MCF 10A (cell line): ENCODE measurements at regions of chr2 and their contacts with region 1.

Region 1: DNA sequence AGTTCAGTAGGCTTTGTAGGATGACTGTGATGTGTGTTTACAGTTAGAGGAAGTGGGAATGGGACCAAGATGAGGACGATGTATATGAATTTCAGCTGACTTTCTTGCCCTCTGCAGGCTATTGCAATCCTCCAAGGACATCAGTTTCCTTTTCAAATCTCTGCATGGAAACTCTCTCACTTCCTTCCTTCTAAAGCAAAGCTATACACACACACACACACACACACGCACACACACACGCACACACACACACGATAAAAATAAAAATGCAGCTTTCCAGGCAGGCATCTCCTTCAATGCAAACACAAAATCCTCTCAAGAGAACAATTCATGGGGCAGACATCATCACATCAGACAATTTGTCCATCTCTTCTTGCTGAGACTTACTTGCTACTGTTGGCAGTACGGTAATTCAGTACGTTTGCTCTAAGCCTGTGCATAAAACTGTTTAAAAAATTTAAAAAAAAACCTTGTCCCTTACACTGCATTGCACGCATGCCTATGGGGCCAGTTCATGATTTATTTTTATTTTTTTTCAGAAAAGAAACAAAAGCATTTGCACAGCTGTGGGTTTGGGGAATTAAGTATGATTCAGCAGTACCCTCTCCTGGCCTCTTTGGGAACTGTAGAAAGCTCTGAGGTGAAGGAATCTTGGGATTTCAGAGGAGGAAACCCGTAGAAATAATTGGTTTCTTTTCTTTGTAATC is 27.1 kb upstream of the ICOS start:
- DNase-seq: peak; percentile 59
- H3K4me3 Mint-ChIP-seq: no peak overlapping the region
- H3K27ac Mint-ChIP-seq: no peak overlapping the region
- H3K4me1 Mint-ChIP-seq: no peaks in the 10 kb centered on the region
- H3K27me3 Mint-ChIP-seq: peaks cover 12% of the 10 kb centered on the region
- CTCF ChIP-seq: peak; percentile 70

Region 2: GRCh38 chr2:202831242-202832220 is 1077.9 kb before region 1 on chr2:
- CTCF ChIA-PET with region 1: no interaction called
- POLR2A ChIA-PET with region 1: no interaction called
- intact Hi-C with region 1: loop called (anchors 1 kb)
- DNase-seq: peak; percentile 84
- H3K4me3 Mint-ChIP-seq: no peak overlapping the region
- H3K27ac Mint-ChIP-seq: no peak overlapping the region
- H3K4me1 Mint-ChIP-seq: peaks cover 8% of the 10 kb centered on the region
- H3K27me3 Mint-ChIP-seq: no peaks in the 10 kb centered on the region
- CTCF ChIP-seq: peak; percentile 46

Region 3: GRCh38 chr2:203225423-203226039 is 683.9 kb before region 1 on chr2:
- CTCF ChIA-PET with region 1: interaction called, 4 read pairs
- POLR2A ChIA-PET with region 1: no interaction called
- intact Hi-C with region 1: loop called (anchors 1 kb)
- DNase-seq: peak; percentile 41
- H3K4me3 Mint-ChIP-seq: no peak overlapping the region
- H3K27ac Mint-ChIP-seq: no peak overlapping the region
- H3K4me1 Mint-ChIP-seq: no peaks in the 10 kb centered on the region
- H3K27me3 Mint-ChIP-seq: no peaks in the 10 kb centered on the region
- CTCF ChIP-seq: peak; percentile 83

Region 4: DNA sequence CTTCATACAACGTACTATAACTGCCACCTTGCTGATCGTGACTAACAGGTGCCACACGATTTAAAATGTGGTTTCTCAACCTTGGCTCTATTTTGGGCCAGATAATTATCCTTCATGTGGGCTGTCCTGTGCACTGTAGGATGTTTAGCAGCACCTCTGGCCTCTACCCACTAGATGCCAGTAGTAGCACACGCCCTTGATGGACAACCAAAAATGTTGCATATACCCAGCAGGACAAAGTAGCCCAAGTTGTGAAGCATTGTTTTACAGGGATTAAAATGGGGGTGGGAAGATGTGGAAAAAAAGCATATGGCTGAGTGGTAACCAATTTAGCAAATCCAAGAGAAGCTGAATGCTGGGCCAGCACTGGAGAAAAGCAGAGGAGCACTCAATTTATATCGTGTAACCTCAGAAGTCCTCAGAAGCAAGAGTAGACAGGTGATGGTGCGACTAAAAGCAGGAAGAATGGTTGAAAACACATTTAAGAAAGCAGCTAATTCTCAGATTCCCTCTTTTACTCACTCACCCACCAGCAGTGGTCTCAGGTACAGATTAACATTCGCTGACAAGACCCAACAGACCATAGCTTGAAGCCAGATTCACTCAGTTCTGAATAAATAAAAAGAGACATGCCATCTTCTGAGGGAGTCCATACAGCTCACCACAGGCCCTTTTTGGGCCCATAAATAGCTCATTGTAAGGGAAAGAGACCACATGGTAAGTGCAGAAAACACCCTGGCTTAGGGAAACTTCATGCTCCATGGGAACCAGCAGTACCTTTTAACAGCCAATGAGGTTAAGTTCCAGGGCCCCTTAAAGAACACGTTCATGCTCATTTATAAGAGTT is 424.9 kb before region 1 on chr2:
- CTCF ChIA-PET with region 1: interaction called, 3 read pairs
- POLR2A ChIA-PET with region 1: no interaction called
- intact Hi-C with region 1: loop called (anchors 1 kb)
- DNase-seq: peak; percentile 58
- H3K4me3 Mint-ChIP-seq: no peak overlapping the region
- H3K27ac Mint-ChIP-seq: no peak overlapping the region
- H3K4me1 Mint-ChIP-seq: no peaks in the 10 kb centered on the region
- H3K27me3 Mint-ChIP-seq: no peaks in the 10 kb centered on the region
- CTCF ChIP-seq: peak; percentile 47

Region 5: DNA sequence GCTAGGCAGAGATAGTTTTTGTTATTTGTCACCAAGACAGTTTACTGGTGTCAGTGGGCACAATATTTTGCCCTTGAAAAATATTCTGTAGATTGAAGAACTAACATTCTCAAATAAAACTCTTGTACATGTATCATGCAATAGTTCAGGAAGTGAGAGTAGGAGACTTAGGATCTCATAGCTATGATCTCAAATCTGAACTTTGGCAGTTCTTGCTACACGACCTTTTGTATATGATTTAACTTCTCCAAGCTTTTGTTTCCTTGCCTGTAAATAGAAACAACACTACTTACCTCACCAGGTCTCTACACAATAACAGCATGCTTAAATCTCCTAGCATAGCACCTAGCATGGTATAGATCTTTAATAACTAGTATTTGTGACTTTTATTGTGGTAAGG is 247.0 kb after region 1 on chr2:
- CTCF ChIA-PET with region 1: no interaction called
- POLR2A ChIA-PET with region 1: no interaction called
- intact Hi-C with region 1: no loop called
- DNase-seq: no peak
- H3K4me3 Mint-ChIP-seq: no peak overlapping the region
- H3K27ac Mint-ChIP-seq: no peak overlapping the region
- H3K4me1 Mint-ChIP-seq: no peaks in the 10 kb centered on the region
- H3K27me3 Mint-ChIP-seq: peaks cover 23% of the 10 kb centered on the region
- CTCF ChIP-seq: no peak